ENCODE measurements at regions of chrX and their contacts with region 1.

Region 1: DNA sequence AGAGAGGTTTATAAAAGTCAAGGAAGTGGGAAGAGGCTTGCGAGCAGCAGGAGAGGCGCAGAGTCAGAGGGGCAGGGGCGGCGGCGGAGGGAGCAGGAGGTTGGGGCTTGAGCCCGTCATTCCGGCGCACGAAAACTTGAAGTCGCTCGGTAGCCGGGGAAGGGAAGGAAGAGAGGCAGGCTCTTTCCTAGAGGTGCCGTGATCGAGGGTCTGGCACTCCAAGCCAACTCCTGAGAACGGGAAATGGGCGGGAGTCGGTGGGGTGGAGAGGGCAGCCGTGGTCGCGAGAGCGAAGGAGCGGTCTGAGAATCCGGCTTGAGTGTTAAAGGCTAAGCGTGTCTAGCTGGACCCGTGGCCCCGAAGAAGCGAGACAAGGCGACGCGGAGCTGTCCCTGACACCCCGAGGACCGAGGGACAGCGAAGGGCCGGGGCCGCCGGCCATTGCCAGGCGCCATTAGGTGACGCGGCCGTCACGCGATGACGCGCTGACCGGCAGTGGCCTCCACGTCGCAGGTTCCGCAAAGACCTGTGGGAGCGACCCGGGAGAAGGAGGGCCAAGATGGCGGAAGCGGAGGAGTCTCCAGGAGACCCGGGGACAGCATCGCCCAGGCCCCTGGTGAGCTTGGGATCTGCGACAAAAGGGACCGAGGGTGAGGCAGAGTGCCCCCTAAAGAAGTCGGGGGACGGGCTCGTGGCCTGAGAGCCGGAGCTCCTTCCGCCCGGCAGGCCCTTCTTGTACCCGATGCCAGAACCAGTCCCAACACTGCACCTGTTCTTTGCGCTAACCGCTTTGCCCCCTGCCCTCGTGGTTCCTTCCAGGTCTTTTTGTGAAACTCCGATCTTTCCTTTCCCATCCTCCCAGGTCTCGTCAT is at the start of gene YIPF6:
- H3K4me3 Mint-ChIP-seq: peak within 1 kb of the TSS; percentile 91
- H3K27ac Mint-ChIP-seq: peak within 1 kb of the TSS; percentile 99
- H3K4me1 Mint-ChIP-seq: peaks cover 6% of the 10 kb centered on the region
- H3K27me3 Mint-ChIP-seq: peaks cover 5% of the 10 kb centered on the region

Region 2: GRCh38 chrX:68196939-68197791 is 301.6 kb before region 1 on chrX:
- intact Hi-C with region 1: loop called (anchors 5 kb)
- H3K4me3 Mint-ChIP-seq: no peak overlapping the region
- H3K27ac Mint-ChIP-seq: no peak overlapping the region
- H3K4me1 Mint-ChIP-seq: no peaks in the 10 kb centered on the region
- H3K27me3 Mint-ChIP-seq: no peaks in the 10 kb centered on the region

Region 3: DNA sequence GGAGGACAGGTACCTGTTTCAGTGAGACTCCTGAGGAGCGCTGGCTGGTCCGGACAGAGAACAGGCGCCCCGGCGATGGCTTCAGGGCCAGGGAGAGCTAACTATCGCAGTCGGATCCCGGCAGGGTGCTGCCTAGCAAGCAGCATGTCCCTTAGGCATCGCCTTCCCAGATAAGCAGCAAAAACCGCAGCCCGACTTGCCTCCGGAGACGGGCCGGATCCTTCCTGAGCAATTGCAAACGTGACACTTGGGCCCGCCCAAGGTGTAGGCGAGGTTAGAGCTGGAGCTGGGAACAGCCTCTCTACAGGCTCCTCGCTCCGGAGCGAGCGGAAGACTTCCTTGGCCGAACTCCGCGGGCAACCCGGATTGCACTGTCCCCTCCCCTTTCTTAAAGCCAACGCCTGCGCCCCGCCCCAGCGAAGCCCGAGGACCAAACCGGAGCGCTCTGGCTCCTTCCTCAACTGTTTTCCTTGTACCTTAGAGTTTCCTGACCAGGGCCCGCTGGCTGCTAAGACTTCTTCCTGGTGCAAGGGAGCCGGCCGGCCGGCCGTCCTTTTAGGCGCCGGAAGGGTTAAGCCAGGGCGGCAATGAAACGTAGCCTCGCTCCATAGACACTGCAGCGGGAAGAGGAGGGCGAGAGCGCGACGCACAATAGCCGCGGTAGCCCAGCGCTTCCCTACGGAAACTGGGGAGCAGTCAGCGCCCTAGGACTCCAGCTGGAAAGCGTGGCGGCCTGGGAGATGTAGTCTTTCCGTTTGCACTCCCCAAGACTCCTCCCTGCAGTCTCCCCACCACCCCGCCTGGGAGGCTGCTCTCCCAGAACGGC is 65.4 kb before region 1 on chrX and contains the start of gene OPHN1:
- intact Hi-C with region 1: loop called (anchors 5 kb)
- H3K4me3 Mint-ChIP-seq: peak within 1 kb of the TSS; percentile 90
- H3K27ac Mint-ChIP-seq: peak within 1 kb of the TSS; percentile 91
- H3K4me1 Mint-ChIP-seq: peaks cover 19% of the 10 kb centered on the region
- H3K27me3 Mint-ChIP-seq: peaks cover 8% of the 10 kb centered on the region

Measured in dendritic cell treated with granulocyte-macrophage colony-stimulating factor and Interleukin-4, amounts not matched to agents 40 ng/mL and 50 ng/mL, for 4 days (primary cell).